Activated naive CD4-positive, alpha-beta T cell treated with anti-CD3 and anti-CD28 coated beads for 36 hours (primary cell): ENCODE measurements at regions of chr20 and their contacts with region 1.

Region 1: DNA sequence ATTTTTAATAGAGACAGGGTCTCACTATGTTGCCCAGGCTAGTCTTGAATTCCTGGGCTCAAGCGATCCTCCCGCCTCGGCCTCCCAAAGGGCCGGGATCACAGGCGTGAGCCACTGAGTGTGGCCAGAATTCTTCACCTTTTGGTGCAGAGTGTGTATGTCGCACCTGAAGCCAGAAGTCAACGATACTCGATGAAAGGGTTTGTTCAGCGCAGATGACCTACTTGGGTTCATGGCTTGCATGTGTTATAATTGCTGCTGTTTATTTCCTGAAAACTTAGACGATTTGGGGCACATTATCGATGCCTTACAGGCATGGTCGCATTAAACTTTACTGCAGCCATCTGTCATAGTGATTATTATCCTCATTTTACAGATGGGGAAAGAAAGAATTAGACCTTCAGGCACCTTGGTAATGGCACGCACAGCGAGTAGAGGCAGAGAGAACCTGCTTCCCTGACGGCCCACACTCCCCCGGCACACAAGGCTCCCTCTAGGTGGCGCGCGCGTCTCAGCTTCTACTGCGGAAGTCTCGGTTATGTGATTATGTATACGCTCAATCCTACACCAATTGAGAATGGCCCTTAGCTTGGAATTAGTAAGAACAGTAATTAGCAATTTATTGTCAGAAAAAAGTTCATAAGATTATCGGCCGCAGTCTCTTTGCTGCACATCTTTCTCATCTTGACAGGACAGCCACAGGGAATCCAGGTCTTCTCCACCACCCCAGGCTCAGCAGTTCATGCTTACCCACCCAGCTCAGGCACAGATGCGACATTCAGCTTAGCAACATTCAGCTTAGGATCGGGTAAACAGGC is 212.8 kb upstream of the PROKR2 start:
- DNase-seq: peak; percentile 96
- H3K4me3 Mint-ChIP-seq: peak overlapping the region; percentile 39
- H3K27ac Mint-ChIP-seq: peak overlapping the region; percentile 76
- H3K4me1 Mint-ChIP-seq: peaks cover 18% of the 10 kb centered on the region
- H3K27me3 Mint-ChIP-seq: no peaks in the 10 kb centered on the region

Region 2: GRCh38 chr20:5402903-5403531 is 126.5 kb before region 1 on chr20:
- CTCF ChIA-PET with region 1: no interaction called
- intact Hi-C with region 1: no loop called
- DNase-seq: peak; percentile 19
- H3K4me3 Mint-ChIP-seq: no peak overlapping the region
- H3K27ac Mint-ChIP-seq: no peak overlapping the region
- H3K4me1 Mint-ChIP-seq: no peaks in the 10 kb centered on the region
- H3K27me3 Mint-ChIP-seq: peaks cover 30% of the 10 kb centered on the region

Region 3: GRCh38 chr20:5557123-5557522 is 27.6 kb after region 1 on chr20:
- CTCF ChIA-PET with region 1: interaction called, 9 read pairs
- intact Hi-C with region 1: loop called (anchors 1 kb)
- DNase-seq: peak; percentile 80
- H3K4me3 Mint-ChIP-seq: no peak overlapping the region
- H3K27ac Mint-ChIP-seq: peak overlapping the region; percentile 67
- H3K4me1 Mint-ChIP-seq: peaks cover 4% of the 10 kb centered on the region
- H3K27me3 Mint-ChIP-seq: no peaks in the 10 kb centered on the region

Region 4: GRCh38 chr20:5735845-5736525 is 206.4 kb after region 1 on chr20:
- CTCF ChIA-PET with region 1: no interaction called
- intact Hi-C with region 1: loop called (anchors 1 kb)
- DNase-seq: no peak
- H3K4me3 Mint-ChIP-seq: no peak overlapping the region
- H3K27ac Mint-ChIP-seq: no peak overlapping the region
- H3K4me1 Mint-ChIP-seq: peaks cover 28% of the 10 kb centered on the region
- H3K27me3 Mint-ChIP-seq: no peaks in the 10 kb centered on the region

Region 5: GRCh38 chr20:5822569-5822968 is 293.0 kb after region 1 on chr20:
- CTCF ChIA-PET with region 1: interaction called, 8 read pairs
- intact Hi-C with region 1: loop called (anchors 1 kb)
- DNase-seq: no peak
- H3K4me3 Mint-ChIP-seq: no peak overlapping the region
- H3K27ac Mint-ChIP-seq: no peak overlapping the region
- H3K4me1 Mint-ChIP-seq: peaks cover 8% of the 10 kb centered on the region
- H3K27me3 Mint-ChIP-seq: no peaks in the 10 kb centered on the region

Region 6: GRCh38 chr20:5933802-5934436 is 404.4 kb after region 1 on chr20:
- CTCF ChIA-PET with region 1: interaction called, 7 read pairs
- intact Hi-C with region 1: loop called (anchors 1 kb)
- DNase-seq: peak; percentile 56
- H3K4me3 Mint-ChIP-seq: no peak overlapping the region
- H3K27ac Mint-ChIP-seq: no peak overlapping the region
- H3K4me1 Mint-ChIP-seq: peaks cover 6% of the 10 kb centered on the region
- H3K27me3 Mint-ChIP-seq: no peaks in the 10 kb centered on the region

Region 7: DNA sequence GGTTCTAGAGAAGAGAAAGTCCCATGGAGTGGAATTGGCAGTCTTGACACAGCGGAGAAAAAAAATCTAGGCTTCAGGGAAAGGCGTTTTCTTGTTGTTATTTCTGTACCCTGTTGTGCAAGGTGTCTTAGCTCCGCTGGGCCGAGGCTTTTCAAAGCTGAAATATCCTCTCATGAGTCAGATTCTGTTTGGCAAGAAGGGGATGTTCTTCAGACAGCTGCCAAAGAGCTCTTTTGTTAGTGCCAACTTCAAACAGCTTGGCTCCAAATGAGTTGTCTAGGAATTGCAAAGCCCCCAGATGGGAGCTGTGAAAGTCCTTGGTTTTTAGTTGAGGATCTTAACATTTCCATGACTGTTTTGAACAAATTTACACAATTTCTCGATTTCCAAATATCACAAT is 478.7 kb after region 1 on chr20:
- CTCF ChIA-PET with region 1: interaction called, 4 read pairs
- intact Hi-C with region 1: loop called (anchors 1 kb)
- DNase-seq: peak; percentile 31
- H3K4me3 Mint-ChIP-seq: no peak overlapping the region
- H3K27ac Mint-ChIP-seq: no peak overlapping the region
- H3K4me1 Mint-ChIP-seq: peaks cover 36% of the 10 kb centered on the region
- H3K27me3 Mint-ChIP-seq: no peaks in the 10 kb centered on the region